ENCODE measurements at regions of chr3 and their contacts with region 1.

Region 1: DNA sequence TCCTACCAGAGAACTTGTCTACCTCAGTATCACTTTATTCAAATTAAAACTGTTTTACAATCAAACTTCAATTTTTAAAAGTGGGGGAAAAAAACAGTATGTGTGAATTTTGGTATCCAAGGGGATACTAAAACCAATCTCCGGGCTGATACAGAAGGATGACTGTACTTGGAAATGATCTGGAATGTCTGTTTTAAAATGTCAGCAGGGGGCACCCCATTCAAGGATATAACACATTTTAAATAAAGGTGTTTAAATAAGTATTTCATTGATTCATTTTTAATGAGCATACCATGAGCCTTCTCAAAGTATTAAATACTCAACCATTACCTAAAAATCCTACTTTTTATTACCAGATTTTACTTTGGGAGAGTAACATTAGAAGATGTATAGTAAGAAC is 67.9 kb downstream of the ULK4 start:
- DNase-seq: no peak
- ATAC-seq: no peak
- H3K4me3 ChIP-seq: no peak overlapping the region
- H3K27ac ChIP-seq: no peak overlapping the region
- H3K4me1 ChIP-seq: no peaks in the 10 kb centered on the region
- H3K27me3 ChIP-seq: no peaks in the 10 kb centered on the region
- CTCF ChIP-seq: peak; percentile 44 to 67 (median 45)
- POLR2A ChIP-seq: no peak

Region 2: DNA sequence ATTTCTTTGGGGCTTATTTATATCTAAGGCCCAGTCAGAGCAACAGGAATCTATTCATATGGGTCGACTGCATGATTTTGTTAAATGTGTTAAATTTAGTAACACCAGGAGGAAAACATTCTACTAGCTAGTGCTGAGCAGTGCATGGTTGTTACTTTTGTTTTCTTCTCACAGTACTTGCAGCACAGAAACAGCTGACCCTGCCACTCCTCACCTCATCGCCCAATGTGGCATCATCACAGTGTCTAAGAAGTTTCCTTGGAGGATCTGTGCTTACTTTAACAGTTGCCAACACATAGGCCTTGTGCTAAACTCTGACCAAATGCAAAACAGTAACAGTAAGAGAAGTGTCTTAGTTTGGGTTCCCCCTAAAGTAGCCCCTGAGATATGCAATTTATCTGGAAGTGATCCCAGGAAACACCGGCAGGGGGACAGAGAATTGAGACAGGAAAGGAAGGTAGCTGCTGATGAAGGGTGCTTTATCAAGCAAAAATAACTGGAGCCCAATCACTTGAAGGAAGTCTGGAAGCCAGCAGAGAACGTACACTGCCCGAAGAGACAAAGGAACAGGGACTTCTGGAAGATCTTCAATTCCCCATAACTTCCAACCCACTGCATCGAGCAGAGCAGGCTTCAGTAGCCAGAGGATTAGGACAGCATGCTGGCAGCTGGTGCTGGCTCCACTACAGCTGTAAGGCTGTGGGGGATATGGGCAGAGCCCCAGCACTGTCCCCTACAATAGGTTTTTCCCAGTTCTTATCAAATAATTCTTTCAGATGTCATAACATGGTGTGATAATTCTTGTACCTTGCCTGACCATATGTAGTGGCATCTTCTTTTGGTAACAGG is 103.9 kb after region 1 on chr3:
- in situ Hi-C with region 1: loop called in 1 of 4 experiments (anchors 10 kb)
- intact Hi-C with region 1: no loop called
- DNase-seq: no peak
- ATAC-seq: peak in 1 of 2 donors; percentile 51
- H3K4me3 ChIP-seq: no peak overlapping the region
- H3K27ac ChIP-seq: peak overlapping the region in 1 of 4 donors; percentile 0
- H3K4me1 ChIP-seq: peaks cover 0 to 12% of the 10 kb centered on the region in 2 donors
- H3K27me3 ChIP-seq: no peaks in the 10 kb centered on the region
- CTCF ChIP-seq: peak in 4 of 5 experiments; percentile 29 to 49 (median 40)
- POLR2A ChIP-seq: no peak

Region 3: GRCh38 chr3:42090973-42091731 is 197.2 kb after region 1 on chr3 and contains the start of gene TRAK1:
- in situ Hi-C with region 1: loop called in 1 of 4 experiments (anchors 5 kb)
- intact Hi-C with region 1: no loop called
- DNase-seq: peak; percentile 39 to 53
- ATAC-seq: peak; percentile 76 to 77
- H3K4me3 ChIP-seq: peak within 1 kb of the TSS; percentile 33 to 43 (median 38)
- H3K27ac ChIP-seq: peak within 1 kb of the TSS; percentile 80 to 86 (median 84)
- H3K4me1 ChIP-seq: peaks cover 29 to 37% of the 10 kb centered on the region in 2 donors
- H3K27me3 ChIP-seq: no peaks in the 10 kb centered on the region
- CTCF ChIP-seq: no peak
- POLR2A ChIP-seq: no peak
- total RNA-seq, gene TRAK1: 59.5 to 109 (median 98.6) TPM

Region 4: DNA sequence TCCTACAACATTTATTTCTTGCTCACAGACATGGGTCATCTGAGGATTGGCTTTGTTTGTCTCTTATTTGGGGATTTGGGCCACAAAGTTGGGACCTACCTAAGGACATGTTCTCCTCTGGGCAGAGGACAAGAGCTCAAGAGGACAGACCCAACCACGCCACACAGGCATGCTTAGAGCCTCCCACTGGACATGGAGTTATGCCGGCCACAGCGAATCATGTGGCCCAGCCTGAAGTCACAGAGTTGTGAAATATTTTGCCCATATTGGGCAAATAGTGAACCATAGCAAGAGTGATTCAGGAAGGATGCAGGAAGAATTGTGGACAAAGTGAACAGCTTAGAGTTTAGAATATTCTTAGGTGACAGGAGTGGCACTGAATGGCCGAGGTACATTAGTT is 207.1 kb after region 1 on chr3:
- in situ Hi-C with region 1: loop called in 2 of 4 experiments (anchors 5 to 10 kb)
- intact Hi-C with region 1: loop called (anchors 1 kb)
- DNase-seq: peak; percentile 37 to 70
- ATAC-seq: peak; percentile 62 to 75
- H3K4me3 ChIP-seq: no peak overlapping the region
- H3K27ac ChIP-seq: peak overlapping the region; percentile 62 to 76 (median 72)
- H3K4me1 ChIP-seq: peaks cover 52 to 62% of the 10 kb centered on the region in 2 donors
- H3K27me3 ChIP-seq: no peaks in the 10 kb centered on the region
- CTCF ChIP-seq: no peak
- POLR2A ChIP-seq: no peak

Region 5: GRCh38 chr3:42190701-42191462 is 296.9 kb after region 1 on chr3:
- in situ Hi-C with region 1: loop called in 2 of 4 experiments (anchors 5 to 10 kb)
- intact Hi-C with region 1: loop called (anchors 1 kb)
- DNase-seq: peak; percentile 50 to 57
- ATAC-seq: peak; percentile 70 to 81
- H3K4me3 ChIP-seq: no peak overlapping the region
- H3K27ac ChIP-seq: peak overlapping the region; percentile 25 to 56 (median 39)
- H3K4me1 ChIP-seq: peaks cover 17 to 29% of the 10 kb centered on the region in 2 donors
- H3K27me3 ChIP-seq: no peaks in the 10 kb centered on the region
- CTCF ChIP-seq: peak; percentile 77 to 91 (median 88)
- POLR2A ChIP-seq: no peak

Region 6: DNA sequence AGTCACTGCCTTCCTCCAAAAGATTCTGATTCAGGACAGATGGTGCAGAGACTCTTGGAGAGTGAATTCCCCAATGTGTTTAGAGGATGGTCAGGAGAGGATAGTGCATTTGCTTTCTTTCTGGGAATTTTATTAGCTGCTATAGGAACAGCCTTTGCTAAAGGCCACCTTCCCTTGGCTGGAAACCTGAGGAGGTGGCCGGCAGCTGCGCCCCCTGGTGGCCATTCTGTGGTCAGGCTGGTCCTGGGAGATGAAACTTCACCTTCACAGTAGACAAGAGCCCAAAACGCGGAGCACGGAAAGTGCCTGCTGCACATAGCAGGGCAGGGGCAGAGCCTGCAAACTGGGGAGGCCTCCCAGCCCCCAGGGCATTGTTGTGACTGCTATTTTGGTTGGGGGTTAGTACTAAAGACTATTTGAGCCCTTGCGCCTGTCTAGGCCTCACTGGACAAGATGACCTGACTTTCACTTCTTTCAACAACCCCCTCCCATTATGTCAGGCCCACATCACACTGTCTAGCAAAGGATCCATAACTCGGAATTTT is 653.5 kb after region 1 on chr3:
- in situ Hi-C with region 1: no loop called
- intact Hi-C with region 1: loop called (anchors 10 kb)
- DNase-seq: peak in 1 of 2 donors; percentile 45
- ATAC-seq: peak; percentile 48 to 82
- H3K4me3 ChIP-seq: no peak overlapping the region
- H3K27ac ChIP-seq: peak overlapping the region in 3 of 4 donors; percentile 20 to 48 (median 47)
- H3K4me1 ChIP-seq: peaks cover 0 to 5% of the 10 kb centered on the region in 2 donors
- H3K27me3 ChIP-seq: no peaks in the 10 kb centered on the region
- CTCF ChIP-seq: peak; percentile 63 to 97 (median 84)
- POLR2A ChIP-seq: no peak

Measured in gastrocnemius medialis (tissue), 4 donors.